ENCODE measurements at regions of chr4 and their contacts with region 1.

Region 1: GRCh38 chr4:85147439-85148076 is 181.1 kb upstream of the WDFY3 start:
- DNase-seq: peak; percentile 13
- H3K4me3 Mint-ChIP-seq: no peak overlapping the region
- H3K27ac Mint-ChIP-seq: no peak overlapping the region
- H3K4me1 Mint-ChIP-seq: no peaks in the 10 kb centered on the region
- H3K27me3 Mint-ChIP-seq: no peaks in the 10 kb centered on the region

Region 2: DNA sequence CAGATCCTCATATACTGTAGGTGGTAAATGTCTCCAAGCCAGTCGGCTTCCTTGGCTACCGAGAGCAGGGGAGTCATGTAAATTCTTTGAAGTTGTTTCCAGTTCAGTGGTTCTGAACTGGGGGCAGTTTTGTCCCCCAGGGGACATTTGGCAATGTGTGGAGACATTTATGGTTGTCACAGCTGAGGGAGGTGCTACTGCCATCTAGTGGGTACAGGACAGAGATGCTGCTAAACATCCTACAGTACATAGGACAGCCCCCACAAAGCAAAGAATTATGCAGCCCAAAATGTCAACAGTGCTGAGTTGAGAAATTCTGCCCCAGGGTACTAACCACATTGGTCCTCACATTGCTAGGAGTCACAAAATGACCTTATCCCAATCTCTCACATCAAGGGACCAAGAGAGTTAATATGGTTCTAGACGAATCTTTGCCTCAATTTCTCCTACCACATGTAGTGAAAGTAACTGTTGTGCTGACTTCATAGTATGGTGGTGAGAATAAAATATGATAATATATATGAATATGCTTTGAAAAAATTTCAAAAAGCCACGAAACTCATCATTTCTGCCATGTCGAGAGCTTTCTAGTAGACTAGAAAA is 223.0 kb after region 1 on chr4:
- CTCF ChIA-PET with region 1: no interaction called
- POLR2A ChIA-PET with region 1: no interaction called
- intact Hi-C with region 1: loop called (anchors 2 kb)
- DNase-seq: peak; percentile 9
- H3K4me3 Mint-ChIP-seq: no peak overlapping the region
- H3K27ac Mint-ChIP-seq: no peak overlapping the region
- H3K4me1 Mint-ChIP-seq: no peaks in the 10 kb centered on the region
- H3K27me3 Mint-ChIP-seq: no peaks in the 10 kb centered on the region

Region 3: DNA sequence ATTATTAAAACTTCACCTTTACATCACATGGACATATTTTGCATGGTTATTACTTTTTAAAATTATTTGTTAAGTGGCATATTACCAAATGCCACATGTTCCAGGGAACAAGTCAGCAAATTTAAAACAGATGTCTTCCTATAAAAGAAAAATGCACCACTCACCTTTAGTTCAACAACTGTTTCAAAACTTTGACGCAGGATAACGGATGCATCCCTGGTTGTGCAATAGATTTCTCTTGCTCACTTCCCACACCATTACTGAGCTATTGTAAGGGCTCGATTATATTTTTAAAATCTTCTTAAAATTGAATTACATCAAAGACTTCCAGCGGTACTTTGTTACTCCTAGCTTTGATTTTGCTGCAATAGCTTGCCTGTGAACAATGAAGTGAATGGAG is 234.4 kb after region 1 on chr4:
- CTCF ChIA-PET with region 1: no interaction called
- POLR2A ChIA-PET with region 1: no interaction called
- intact Hi-C with region 1: no loop called
- DNase-seq: no peak
- H3K4me3 Mint-ChIP-seq: no peak overlapping the region
- H3K27ac Mint-ChIP-seq: no peak overlapping the region
- H3K4me1 Mint-ChIP-seq: no peaks in the 10 kb centered on the region
- H3K27me3 Mint-ChIP-seq: no peaks in the 10 kb centered on the region

Region 4: DNA sequence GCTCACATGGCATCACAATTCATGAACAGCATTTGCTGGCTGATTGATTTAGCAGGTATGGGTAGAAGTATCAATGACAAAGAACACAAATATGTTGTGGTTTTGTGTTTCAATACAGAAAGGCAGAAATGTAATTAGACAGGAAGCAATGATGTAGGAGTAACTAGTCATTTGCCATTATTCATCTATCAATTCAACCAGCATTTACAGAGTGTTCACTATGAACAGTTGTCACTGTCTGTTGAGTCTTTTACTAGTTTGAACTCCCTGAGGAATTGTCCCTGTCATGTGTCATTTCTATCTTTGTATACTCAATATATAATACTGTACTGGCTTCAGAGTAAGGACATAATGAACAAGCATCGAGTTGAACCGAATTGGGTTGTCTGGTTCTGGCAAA is 275.9 kb after region 1 on chr4:
- CTCF ChIA-PET with region 1: no interaction called
- POLR2A ChIA-PET with region 1: no interaction called
- intact Hi-C with region 1: no loop called
- DNase-seq: no peak
- H3K4me3 Mint-ChIP-seq: no peak overlapping the region
- H3K27ac Mint-ChIP-seq: no peak overlapping the region
- H3K4me1 Mint-ChIP-seq: no peaks in the 10 kb centered on the region
- H3K27me3 Mint-ChIP-seq: no peaks in the 10 kb centered on the region

Region 5: DNA sequence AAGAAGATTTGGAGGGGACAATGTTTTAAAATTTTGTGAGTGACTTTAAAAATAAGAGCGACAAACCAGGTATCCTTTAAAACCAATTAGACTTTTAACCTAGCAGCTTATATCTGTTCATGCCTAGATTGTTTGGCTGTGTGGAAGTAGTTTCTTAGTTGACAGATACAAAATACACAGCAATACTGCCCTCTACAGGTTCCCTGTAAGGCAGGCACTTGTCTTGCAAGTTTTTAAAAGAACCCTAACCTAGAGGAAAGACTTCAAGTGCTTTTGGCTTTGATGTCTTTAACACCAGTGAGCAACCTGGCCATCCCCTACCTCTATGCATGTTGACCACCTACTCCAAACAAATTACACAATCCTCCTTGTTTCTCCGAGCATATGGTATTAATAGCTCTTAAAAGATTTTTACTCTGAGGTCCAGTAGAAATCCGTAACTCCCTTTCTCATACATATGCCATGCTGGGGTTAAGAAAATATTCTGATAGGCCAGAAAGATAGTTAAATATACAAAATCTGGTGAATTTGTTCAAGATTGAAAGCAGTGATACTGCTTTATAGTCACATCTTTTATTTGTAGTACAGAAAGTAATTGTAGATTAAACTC is 600.4 kb after region 1 on chr4:
- CTCF ChIA-PET with region 1: interaction called, 5 read pairs
- POLR2A ChIA-PET with region 1: no interaction called
- intact Hi-C with region 1: loop called (anchors 1 kb)
- DNase-seq: no peak
- H3K4me3 Mint-ChIP-seq: no peak overlapping the region
- H3K27ac Mint-ChIP-seq: no peak overlapping the region
- H3K4me1 Mint-ChIP-seq: no peaks in the 10 kb centered on the region
- H3K27me3 Mint-ChIP-seq: no peaks in the 10 kb centered on the region

Region 6: DNA sequence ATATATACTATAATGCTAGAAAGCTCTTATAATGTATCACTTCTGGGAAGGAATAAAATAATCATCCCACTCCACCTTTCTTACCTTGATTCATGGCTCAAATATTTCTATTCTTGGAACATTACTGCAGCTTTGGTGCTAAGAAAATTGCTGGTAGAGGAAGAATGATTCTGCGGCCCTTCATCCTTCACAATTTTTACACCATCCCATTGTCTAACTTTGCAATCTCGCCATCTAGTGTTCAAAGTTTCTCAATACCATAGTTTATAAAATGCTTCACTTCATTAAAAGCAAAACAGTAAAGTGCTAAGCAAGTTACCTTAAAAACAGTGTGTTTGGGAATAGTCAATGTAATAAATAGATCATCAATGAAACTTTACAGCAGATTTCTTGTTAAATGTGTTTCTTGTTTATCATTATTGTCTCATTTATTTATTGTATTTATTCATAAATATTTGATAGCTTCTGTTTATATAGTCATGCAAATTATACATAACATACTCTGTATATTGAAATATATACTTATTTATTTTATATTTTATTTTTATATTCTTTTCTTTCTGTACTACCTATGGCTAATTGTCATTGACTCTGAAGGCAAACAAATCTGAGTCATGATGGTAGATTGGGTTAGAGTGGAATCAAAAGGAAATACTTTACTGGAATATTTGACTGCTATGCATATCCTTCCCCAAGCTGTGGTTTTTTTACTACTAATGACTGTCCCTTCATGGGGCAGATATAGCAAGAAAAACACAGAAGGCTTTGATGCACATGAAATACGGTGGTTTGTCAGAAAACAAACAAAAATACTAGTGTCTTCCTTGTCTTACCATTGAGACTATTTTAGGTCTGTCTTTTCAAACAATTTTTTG is 821.6 kb after region 1 on chr4:
- CTCF ChIA-PET with region 1: no interaction called
- POLR2A ChIA-PET with region 1: no interaction called
- intact Hi-C with region 1: loop called (anchors 10 kb)
- DNase-seq: no peak
- H3K4me3 Mint-ChIP-seq: no peak overlapping the region
- H3K27ac Mint-ChIP-seq: no peak overlapping the region
- H3K4me1 Mint-ChIP-seq: no peaks in the 10 kb centered on the region
- H3K27me3 Mint-ChIP-seq: no peaks in the 10 kb centered on the region

Region 7: DNA sequence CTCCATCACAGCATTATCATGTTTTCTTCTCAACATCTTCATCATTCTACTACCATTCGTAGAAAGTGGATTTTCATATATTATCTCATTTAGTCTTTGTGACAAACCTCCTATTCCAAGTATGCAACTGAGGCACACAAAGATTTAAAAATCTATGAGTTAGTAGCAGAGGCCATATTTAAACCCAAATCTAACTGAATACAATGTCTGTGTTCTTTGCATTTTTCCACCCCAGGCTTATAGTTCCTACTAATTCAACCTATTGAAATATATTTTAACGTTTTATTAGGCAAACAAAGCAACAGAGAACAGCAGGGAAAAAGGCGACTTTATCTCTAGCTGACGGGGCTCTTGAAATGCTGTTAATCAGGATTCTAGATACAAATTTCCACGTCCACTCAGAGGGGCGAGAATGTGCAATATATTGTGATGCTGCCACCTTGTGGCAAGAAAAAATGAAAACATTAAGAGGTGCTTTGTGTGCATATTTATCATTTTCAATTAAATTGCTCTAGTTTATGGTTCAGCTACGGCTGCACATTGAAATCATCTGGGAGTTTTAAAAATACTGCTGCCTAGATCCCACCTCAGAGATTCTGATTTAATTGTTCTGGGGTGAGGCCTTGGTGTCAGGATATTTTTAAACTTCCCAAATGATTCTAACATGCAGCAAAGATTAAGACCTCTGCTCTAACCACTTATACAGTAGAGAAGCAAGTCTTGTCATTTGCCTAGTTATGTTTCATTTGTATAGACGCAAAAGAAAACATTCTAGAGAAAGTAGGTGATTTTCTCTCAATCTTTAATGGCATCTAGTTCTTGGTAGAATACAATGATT is 896.4 kb after region 1 on chr4:
- CTCF ChIA-PET with region 1: interaction called, 4 read pairs
- POLR2A ChIA-PET with region 1: no interaction called
- intact Hi-C with region 1: loop called (anchors 5 kb)
- DNase-seq: no peak
- H3K4me3 Mint-ChIP-seq: no peak overlapping the region
- H3K27ac Mint-ChIP-seq: no peak overlapping the region
- H3K4me1 Mint-ChIP-seq: no peaks in the 10 kb centered on the region
- H3K27me3 Mint-ChIP-seq: no peaks in the 10 kb centered on the region

Measured in activated CD4-positive, alpha-beta memory T cell treated with anti-CD3 and anti-CD28 coated beads for 36 hours (primary cell).